Activated CD8-positive, alpha-beta memory T cell treated with anti-CD3 and anti-CD28 coated beads, Interleukin-2, amount 10 ng/mL, durations not matched to agents 7 days and 5 days (primary cell): ENCODE measurements at regions of chr13 and their contacts with region 1.

Region 1: GRCh38 chr13:24020375-24020830 is 123.1 kb upstream of the C1QTNF9B start:
- DNase-seq: peak; percentile 65
- ATAC-seq: peak; percentile 45
- H3K4me3 Mint-ChIP-seq: no peak overlapping the region
- H3K27ac Mint-ChIP-seq: no peak overlapping the region
- H3K4me1 Mint-ChIP-seq: peaks cover 10% of the 10 kb centered on the region
- H3K27me3 Mint-ChIP-seq: no peaks in the 10 kb centered on the region

Region 2: DNA sequence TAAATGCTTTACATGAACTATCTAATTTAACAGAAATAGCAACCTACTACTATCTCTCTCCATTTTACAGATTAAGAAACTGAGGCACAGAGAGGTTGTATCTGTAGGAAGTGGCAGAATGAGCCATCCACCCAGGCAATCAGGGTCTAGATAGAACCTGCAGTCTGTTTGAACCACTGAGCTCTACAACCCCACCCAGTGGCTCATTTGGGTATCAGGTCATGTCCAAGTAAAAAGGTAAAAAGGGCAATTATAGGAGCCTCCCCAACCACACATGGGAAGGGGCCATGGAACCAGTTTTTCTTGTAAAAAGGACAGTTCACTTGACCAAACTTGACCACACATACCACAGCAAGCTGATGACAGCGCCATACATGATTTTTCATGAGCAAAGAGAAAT is 932.5 kb before region 1 on chr13:
- CTCF ChIA-PET with region 1: no interaction called
- DNase-seq: no peak
- ATAC-seq: no peak
- H3K4me3 Mint-ChIP-seq: no peak overlapping the region
- H3K27ac Mint-ChIP-seq: no peak overlapping the region
- H3K4me1 Mint-ChIP-seq: no peaks in the 10 kb centered on the region
- H3K27me3 Mint-ChIP-seq: peaks cover 4% of the 10 kb centered on the region

Region 3: DNA sequence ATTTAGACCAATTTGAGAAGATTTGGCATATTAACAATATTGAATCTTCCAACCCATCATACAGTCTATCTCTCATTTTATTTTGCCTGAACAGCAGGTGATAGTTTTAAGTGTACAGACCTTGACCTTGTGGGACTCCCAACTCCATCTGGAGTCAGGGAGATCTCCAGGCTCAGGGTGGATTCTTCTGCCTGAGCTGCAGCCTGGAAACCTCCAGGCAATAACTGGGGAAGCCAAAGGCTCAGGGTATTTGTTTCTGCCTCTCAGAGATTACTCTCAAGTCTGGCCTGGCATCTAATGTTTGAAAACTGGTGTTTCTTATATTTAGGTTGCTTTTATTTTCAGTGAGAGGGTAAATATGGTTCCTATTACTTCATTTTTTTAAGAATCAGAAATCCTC is 21.0 kb before region 1 on chr13:
- CTCF ChIA-PET with region 1: no interaction called
- DNase-seq: no peak
- ATAC-seq: no peak
- H3K4me3 Mint-ChIP-seq: no peak overlapping the region
- H3K27ac Mint-ChIP-seq: no peak overlapping the region
- H3K4me1 Mint-ChIP-seq: peaks cover 4% of the 10 kb centered on the region
- H3K27me3 Mint-ChIP-seq: peaks cover 4% of the 10 kb centered on the region

Region 4: DNA sequence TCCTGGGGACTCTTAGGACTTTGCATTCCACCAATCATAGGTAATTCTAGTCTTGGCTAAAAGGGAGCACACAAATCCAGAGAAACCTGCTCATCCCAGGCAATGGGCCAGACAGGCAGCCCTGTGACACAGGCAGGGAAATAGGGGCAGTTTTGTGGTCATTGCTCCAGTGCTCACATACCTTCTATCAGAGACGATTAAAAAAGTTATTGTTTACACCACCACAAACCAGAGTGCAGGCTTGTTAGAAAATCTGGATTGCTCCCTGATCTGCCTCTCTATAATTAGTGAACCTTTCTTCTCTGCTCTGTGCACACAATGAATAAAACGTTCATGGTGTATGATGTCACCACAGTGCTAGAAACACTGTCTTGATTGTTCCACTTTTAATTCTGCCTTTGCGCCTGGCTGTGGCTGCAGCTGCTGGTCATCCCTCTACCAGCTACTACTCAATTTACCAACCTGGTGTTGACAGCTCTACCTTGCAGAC is 18.5 kb after region 1 on chr13:
- CTCF ChIA-PET with region 1: interaction called, 12 read pairs
- DNase-seq: no peak
- ATAC-seq: peak; percentile 40
- H3K4me3 Mint-ChIP-seq: peak overlapping the region; percentile 37
- H3K27ac Mint-ChIP-seq: peak overlapping the region; percentile 77
- H3K4me1 Mint-ChIP-seq: peaks cover 40% of the 10 kb centered on the region
- H3K27me3 Mint-ChIP-seq: peaks cover 4% of the 10 kb centered on the region

Region 5: GRCh38 chr13:24087605-24088225 is 67.3 kb after region 1 on chr13:
- CTCF ChIA-PET with region 1: no interaction called
- DNase-seq: no peak
- ATAC-seq: no peak
- H3K4me3 Mint-ChIP-seq: no peak overlapping the region
- H3K27ac Mint-ChIP-seq: no peak overlapping the region
- H3K4me1 Mint-ChIP-seq: no peaks in the 10 kb centered on the region
- H3K27me3 Mint-ChIP-seq: peaks cover 29% of the 10 kb centered on the region

Region 6: DNA sequence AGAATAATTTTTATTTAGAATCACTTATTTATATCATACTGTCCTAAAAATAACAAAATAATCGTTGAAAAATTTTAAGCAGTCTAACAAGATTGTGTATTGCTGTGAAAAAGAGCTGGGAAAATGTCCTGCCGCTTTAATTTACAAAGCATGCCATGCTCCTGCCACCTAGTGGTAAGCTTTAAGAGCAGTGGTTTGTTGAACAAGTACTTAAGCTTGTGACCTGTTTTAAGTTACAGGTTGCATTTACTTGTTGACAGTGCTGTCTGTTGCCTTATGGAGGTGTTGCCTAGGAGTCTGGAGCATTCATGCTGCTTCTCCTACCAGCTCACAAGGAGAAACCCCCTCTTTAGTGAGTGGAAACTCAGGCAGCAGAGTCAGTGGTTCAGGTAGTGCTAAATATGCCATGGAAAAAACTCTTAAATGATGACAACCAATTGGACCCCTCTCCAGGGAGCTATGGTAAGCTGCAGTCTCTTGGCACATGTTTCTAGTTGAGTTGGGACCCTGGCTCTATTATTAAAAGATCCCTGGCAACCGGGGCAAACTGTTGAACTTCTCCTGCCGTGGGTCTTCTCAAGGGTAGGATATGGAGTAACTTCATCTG is 208.6 kb after region 1 on chr13:
- CTCF ChIA-PET with region 1: interaction called, 44 read pairs
- DNase-seq: peak; percentile 61
- ATAC-seq: peak; percentile 17
- H3K4me3 Mint-ChIP-seq: no peak overlapping the region
- H3K27ac Mint-ChIP-seq: no peak overlapping the region
- H3K4me1 Mint-ChIP-seq: peaks cover 64% of the 10 kb centered on the region
- H3K27me3 Mint-ChIP-seq: no peaks in the 10 kb centered on the region